Activated CD8-positive, alpha-beta T cell treated with anti-CD3 and anti-CD28 coated beads for 36 hours (primary cell): ENCODE measurements at regions of chr7 and their contacts with region 1.

Region 1: GRCh38 chr7:73683056-73683964 is at the starts of genes BUD23 and DNAJC30:
- DNase-seq: peak; percentile 99
- ATAC-seq: peak; percentile 98
- H3K4me3 Mint-ChIP-seq: peak within 1 kb of the TSS; percentile 97
- H3K27ac Mint-ChIP-seq: peak within 1 kb of the TSS; percentile 97
- H3K4me1 Mint-ChIP-seq: peaks cover 47% of the 10 kb centered on the region
- H3K27me3 Mint-ChIP-seq: no peaks in the 10 kb centered on the region
- CTCF ChIP-seq: no peak
- total RNA-seq, gene BUD23: 108 TPM
- total RNA-seq, gene DNAJC30: 6.7 to 7.0 TPM

Region 2: GRCh38 chr7:73718905-73719805 is 35.8 kb after region 1 on chr7 and contains the start of gene STX1A:
- CTCF ChIA-PET with region 1: interaction called, 3 read pairs
- POLR2A ChIA-PET with region 1: no interaction called
- intact Hi-C with region 1: loop called (anchors 5 kb)
- DNase-seq: peak; percentile 73
- ATAC-seq: peak; percentile 74
- H3K4me3 Mint-ChIP-seq: peak within 1 kb of the TSS; percentile 71
- H3K27ac Mint-ChIP-seq: peak within 1 kb of the TSS; percentile 47
- H3K4me1 Mint-ChIP-seq: peaks cover 35% of the 10 kb centered on the region
- H3K27me3 Mint-ChIP-seq: peaks cover 4% of the 10 kb centered on the region
- CTCF ChIP-seq: no peak
- total RNA-seq, gene STX1A: 11.4 to 11.5 TPM